ENCODE measurements at regions of chr1 and their contacts with region 1.

Region 1: DNA sequence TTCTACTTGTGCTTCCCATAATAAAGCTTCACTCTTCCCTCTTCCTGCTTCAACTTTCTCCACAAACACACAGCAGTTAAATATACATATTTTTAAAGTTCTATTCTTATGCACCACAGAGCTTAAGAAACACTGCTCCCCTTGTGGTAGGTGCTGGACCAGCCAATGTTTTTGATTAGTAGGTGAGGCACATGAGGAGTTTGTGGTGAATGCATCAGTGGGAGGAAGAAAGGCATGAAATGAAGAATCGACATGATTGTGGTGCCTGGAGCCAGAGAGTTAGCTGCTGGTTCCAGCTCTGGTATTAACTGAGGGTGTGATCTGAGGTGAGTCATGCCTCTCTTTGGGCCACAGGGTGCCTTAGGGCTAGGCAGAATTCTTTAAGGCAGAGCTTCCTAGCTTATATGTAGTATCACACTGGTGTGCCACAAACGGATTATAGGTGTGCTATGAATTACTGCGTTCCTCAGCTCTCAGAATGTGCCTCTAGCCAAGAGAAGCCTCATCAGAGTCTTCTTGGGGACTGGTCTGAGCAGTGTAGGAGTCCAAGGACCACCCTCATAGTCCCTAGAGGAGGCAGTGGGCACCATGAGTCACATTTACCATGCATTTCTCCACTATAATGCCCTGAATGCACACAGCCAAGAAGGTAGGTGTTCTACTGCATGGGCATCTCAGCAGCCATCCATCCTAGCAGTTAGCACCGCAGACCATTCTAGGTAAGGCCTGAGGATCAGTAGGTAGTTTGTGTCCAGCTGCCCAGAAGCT is 97.4 kb upstream of the SGIP1 start:
- DNase-seq: peak in 10 of 14 experiments; percentile 6 to 68 (median 22)
- ATAC-seq: peak; percentile 94
- H3K4me3 ChIP-seq: no peak overlapping the region
- H3K4me3 Mint-ChIP-seq: no peak overlapping the region
- H3K27ac ChIP-seq: no peak overlapping the region
- H3K27ac Mint-ChIP-seq: no peak overlapping the region
- H3K4me1 ChIP-seq: peaks cover 7% of the 10 kb centered on the region
- H3K4me1 Mint-ChIP-seq: peaks cover 9% of the 10 kb centered on the region
- H3K27me3 ChIP-seq: no peaks in the 10 kb centered on the region
- H3K27me3 Mint-ChIP-seq: no peaks in the 10 kb centered on the region
- CTCF ChIP-seq: peak; percentile 18

Region 2: DNA sequence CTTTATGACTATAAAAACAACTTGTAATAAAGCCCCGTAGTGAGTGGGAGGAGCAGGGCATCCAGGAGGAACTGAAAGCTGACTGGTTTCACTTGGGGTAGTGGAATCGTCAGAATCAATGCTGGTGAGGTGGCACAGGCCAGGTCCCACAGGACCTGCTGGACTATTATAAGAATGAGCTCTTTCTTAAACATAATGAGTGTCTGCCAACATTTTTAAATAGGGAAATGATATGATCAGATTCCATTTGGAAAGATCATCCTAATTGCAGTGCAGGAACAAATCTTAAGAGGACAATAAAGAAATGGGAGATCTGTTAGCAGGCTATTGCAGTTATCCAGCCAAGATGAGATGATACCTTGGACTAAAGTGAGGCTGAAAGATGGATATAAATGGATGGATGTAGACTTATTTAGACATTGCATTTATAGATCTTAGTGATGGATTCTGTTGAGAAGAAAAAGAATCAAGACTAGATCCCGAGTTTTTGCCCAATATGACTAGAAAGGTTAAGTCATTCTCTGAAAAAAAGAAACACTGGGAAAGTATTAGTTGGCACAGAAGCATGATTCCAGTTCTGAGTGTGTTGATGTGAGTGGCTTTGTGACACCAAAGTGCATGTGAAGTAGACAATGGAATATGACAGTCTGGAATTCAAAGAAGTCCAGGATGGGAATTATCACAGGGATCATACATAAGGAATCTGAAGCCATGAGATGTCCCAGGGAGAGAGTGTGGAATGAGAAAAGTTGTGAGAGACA is 55.9 kb before region 1 on chr1:
- CTCF ChIA-PET with region 1: interaction called, 3 read pairs
- POLR2A ChIA-PET with region 1: no interaction called
- intact Hi-C with region 1: loop called in 1 of 2 experiments (anchors 5 kb)
- DNase-seq: peak in 3 of 14 experiments; percentile 46 to 69 (median 63)
- ATAC-seq: peak; percentile 43
- H3K4me3 ChIP-seq: no peak overlapping the region
- H3K4me3 Mint-ChIP-seq: peak overlapping the region; percentile 5
- H3K27ac ChIP-seq: no peak overlapping the region
- H3K27ac Mint-ChIP-seq: no peak overlapping the region
- H3K4me1 ChIP-seq: peaks cover 15% of the 10 kb centered on the region
- H3K4me1 Mint-ChIP-seq: peaks cover 31% of the 10 kb centered on the region
- H3K27me3 ChIP-seq: no peaks in the 10 kb centered on the region
- H3K27me3 Mint-ChIP-seq: no peaks in the 10 kb centered on the region
- CTCF ChIP-seq: no peak

Region 3: DNA sequence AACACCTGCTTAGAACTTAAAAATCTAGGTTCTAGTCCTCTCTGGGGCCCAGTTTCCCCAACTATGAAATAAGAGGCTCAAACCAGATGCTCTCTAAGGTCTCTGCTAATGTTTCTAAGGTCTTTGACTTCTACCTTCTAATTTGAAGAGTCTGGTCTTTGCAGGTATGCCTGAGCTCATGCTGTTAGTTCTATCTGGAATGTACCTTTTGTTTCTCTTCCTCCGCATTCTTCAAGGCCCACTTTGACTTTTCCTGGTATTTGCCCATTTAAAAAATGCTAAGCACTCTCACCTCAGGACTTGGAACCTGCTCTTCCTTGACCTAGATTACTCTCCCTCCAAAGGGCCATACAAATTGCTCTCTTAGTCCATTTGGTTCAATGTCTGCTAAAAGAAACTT is 603.8 kb after region 1 on chr1:
- CTCF ChIA-PET with region 1: no interaction called
- POLR2A ChIA-PET with region 1: no interaction called
- intact Hi-C with region 1: no loop called
- DNase-seq: no peak
- ATAC-seq: no peak
- H3K4me3 ChIP-seq: no peak overlapping the region
- H3K4me3 Mint-ChIP-seq: no peak overlapping the region
- H3K27ac ChIP-seq: no peak overlapping the region
- H3K27ac Mint-ChIP-seq: no peak overlapping the region
- H3K4me1 ChIP-seq: no peaks in the 10 kb centered on the region
- H3K4me1 Mint-ChIP-seq: peaks cover 19% of the 10 kb centered on the region
- H3K27me3 ChIP-seq: no peaks in the 10 kb centered on the region
- H3K27me3 Mint-ChIP-seq: no peaks in the 10 kb centered on the region
- CTCF ChIP-seq: no peak

Measured in CD4-positive, alpha-beta T cell (primary cell).